Right ventricle myocardium inferior (tissue), 1 donor: ENCODE measurements at regions of chr10 and their contacts with region 1.

Region 1: GRCh38 chr10:4767033-4767814 is 58.8 kb upstream of the AKR1E2 start:
- DNase-seq: no peak
- ATAC-seq: peak; percentile 61

Region 2: GRCh38 chr10:3197348-3198003 is 1569.7 kb before region 1 on chr10:
- intact Hi-C with region 1: loop called (anchors 1 kb)
- DNase-seq: peak; percentile 87
- ATAC-seq: peak; percentile 89

Region 3: DNA sequence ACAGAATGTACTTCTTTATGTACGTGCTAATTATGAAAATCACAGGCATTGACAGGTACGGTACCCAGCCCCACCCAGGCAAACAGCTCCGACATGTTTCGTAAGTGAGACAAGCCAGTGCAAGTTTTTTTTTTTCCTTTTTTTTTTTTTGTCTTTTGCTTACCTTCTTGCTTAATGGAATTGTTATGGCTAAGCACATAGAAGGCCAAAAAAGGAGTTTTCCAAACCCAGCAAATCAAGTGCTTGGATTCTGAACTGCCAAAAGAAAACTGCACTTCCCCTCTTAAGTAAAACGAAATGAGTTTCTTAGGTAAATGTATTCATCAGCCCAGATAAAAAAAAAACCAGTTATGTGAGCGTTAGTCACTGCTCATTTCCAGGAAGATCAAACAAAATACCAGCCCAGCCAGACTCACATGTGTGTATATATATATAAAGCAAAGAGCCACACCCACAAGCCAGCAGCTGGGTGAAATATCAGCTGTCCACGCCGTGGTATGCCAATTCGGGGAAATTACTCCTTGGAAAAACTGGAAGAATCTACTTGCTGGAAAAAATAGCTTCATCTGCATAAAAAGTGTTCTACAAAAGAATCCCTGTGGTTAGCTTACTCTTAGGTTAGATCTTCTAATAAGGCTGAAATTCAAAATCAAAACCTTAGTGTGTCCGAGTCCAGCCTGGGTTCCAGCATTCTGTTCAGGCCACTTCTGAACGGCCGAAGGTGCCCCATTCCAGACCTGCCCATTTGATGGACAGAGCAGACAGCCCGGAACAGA is 990.2 kb before region 1 on chr10:
- intact Hi-C with region 1: loop called (anchors 1 kb)
- DNase-seq: no peak
- ATAC-seq: peak; percentile 15

Region 4: DNA sequence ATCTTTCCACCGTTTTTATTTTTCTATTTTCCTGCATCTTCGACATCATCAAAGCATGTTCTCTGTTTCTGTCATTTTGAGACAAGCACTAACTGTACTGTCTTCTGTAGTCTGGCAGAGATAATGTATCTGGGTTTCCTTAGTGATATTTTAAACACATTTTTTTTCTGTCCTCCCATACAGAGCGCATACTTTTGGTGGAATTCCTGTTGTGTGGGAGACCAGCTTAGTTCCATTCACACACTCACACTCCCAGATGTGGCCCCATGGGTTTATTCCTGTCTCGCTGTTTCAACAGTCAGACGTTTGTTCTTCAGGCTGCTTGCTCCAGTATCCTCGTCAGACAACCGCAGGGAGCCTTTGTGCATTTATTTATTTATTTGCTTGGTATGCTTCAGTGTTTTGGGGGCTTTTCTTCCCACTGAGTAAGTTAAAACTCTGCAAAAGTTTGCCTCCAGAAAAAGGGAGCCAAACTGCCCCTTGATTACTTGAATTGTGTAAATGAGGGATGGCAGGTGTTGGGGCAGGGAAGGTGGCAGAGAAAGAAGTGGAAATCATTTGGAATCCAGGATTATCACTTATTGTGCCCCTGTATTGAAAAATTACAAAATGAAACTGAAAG is 525.4 kb before region 1 on chr10:
- intact Hi-C with region 1: loop called (anchors 5 kb)
- DNase-seq: no peak
- ATAC-seq: peak; percentile 89

Region 5: GRCh38 chr10:4475827-4476490 is 291.3 kb before region 1 on chr10:
- intact Hi-C with region 1: no loop called
- DNase-seq: no peak
- ATAC-seq: no peak

Region 6: DNA sequence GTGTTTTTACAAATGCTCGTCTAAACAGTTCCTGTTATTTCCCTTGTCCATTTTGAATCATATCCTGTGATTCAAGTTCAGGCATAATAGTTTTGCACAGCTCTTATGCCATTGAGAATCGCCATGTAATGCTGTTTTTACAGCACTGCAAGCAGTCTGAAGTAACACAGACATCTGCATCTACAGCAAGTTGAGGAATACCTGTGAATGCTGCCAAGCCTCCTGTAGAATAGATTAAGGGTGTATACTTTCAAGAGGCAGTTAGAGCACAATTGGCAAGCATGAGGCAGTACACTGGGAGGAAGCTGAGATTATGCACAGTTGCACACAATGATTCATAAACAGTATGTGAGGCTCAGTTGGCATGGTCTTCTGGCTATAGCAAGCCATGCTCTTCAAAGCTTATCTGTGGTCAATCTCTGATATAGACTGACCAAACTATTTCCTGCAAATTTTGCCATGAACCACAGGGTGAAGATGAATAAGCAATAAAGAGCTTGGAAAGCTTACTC is 63.1 kb before region 1 on chr10:
- intact Hi-C with region 1: loop called (anchors 5 kb)
- DNase-seq: no peak
- ATAC-seq: peak; percentile 79

Region 7: DNA sequence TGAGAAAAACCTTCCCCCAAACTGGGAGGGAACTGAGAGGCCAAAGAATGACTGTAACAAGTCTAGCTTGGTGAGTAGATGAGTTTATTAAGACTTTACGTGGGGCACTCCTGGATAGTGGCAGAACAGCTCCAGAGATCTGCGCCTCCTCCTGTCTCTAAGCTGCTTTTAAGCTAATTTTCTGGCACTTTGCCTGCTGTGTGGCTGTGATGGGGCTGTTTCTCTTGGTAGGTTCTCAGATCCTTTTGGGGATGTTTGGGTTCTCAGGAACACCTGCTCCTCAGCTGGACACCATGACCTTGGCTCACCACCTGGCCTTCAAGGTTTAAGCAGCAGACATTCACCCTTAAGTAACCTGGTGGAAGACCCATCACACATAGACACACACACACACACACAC is 127.1 kb after region 1 on chr10:
- intact Hi-C with region 1: no loop called
- DNase-seq: no peak
- ATAC-seq: no peak

Region 8: GRCh38 chr10:4909118-4909517 is 141.9 kb after region 1 on chr10:
- intact Hi-C with region 1: no loop called
- DNase-seq: no peak
- ATAC-seq: no peak

Region 9: DNA sequence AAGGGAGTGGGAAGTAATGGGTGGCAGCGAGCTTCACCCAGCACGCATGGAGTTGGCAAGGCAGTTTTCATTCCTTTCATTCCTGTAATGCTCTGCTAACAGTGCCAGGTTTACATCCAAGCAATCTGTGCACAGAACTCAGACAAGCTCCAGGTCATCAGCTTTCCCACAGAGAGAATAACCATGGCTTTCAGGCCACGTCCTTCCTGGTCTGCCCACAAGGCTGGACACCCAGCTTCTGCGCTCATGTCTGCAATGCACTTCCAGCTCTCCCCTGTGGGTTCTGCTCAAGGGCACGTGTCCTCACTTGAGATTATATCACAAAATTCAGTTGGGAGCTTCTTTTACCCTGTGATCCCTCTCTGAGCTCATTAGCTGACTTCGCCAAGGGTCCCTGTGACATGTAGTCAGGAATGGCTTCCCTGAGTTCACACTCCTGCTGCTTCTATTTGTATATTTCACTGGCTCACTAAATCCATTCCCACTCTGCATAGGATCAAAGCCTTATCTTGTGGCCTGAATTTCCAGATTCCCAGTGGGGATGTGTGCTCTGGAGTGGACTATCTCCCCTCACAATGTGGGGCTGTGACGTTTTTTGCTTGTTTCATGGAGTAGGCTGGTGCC is 217.9 kb after region 1 on chr10:
- intact Hi-C with region 1: no loop called
- DNase-seq: no peak
- ATAC-seq: peak; percentile 66